ENCODE measurements at regions of chr11 and their contacts with region 1.

Region 1: DNA sequence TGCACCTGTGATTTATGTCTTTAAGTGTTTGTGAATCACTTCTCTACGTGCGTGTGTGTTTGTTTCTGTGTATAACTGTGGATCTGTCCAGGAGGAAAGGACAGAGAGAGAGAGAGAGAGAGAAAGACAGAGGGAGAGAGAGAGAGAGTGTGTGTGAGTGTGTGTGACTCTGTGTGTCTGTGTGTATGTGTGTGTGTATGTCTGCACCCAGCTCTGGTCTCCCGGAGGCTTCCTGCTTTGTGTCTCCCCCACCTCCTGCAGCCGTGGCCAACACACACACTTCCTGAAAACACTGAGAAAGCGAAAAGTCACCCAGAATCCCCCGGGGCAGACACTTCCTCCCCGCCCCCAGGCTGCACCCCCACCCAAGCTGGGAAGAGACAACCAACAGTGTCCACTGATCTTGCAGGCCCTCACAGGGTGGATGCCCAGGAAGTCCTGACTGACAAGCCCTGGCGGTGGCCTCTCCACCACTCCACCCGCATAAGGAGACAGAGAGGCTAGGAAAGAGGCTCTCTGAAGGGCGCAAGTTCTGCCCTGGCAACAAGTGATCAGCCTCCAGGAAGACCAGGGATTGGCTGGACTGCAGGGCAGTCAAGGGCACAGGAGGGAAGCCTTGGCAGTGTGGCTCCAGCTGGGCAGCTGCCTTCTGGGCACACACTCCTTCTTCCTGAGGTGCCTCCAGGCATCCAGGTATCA is 30.0 kb downstream of the ARAP1 start:
- DNase-seq: peak; percentile 98
- H3K4me3 ChIP-seq: peak overlapping the region; percentile 66 to 73 (median 71)
- H3K27ac ChIP-seq: peak overlapping the region; percentile 74 to 89 (median 84)
- H3K4me1 ChIP-seq: peaks cover 52 to 85% (median 70%) of the 10 kb centered on the region in 4 donors
- H3K27me3 ChIP-seq: no peaks in the 10 kb centered on the region
- CTCF ChIP-seq: no peak
- EP300 ChIP-seq: no peak
- POLR2A ChIP-seq: no peak

Region 2: DNA sequence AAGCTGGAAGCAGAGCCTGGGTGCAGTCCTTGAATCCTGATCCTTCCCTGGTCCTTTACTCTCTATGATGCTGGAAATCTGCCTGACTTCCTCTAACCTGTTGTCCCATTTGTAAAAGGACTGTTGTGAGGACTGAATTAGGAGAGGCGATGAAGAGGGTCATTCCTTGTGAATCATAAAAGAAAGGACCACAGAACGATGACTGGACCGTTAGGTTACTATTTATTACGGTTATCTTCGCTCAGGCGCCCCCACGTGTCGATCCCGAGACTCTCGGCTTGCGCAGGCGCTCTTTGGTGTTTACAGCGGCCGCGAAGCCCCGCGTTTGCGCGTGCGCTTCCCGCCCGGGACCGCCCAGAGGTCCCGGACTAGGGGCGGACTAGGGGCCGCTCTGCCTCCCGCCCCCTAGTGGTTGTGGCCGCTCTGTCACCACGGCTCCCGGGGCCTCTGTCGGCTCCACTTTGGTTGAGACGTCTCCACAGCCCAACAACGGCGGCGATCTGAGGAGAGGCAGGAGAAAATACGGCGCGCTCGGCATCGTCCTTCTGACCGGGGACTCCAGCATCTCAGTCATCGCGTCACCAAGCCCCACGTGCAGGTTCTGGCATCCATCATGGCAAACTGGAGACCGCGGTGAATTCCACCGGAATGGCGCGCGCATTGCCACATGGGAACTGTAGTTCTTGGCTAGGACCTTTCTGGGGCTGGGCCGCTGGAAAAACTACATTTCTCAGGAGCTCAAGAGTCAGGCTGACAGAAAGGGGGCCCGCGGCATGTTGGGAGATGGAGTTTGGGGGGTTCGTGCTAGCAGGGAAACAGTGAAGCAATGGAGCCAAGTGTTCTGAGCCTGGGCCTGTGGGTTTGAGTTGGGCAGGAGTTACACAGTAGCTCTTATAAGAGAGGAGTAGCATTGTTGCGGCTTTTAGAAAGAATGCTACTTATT is 71.5 kb after region 1 on chr11 and contains the start of gene STARD10:
- intact Hi-C with region 1: loop called (anchors 1 kb)
- DNase-seq: peak; percentile 99
- H3K4me3 ChIP-seq: peak within 1 kb of the TSS; percentile 66 to 75 (median 68)
- H3K27ac ChIP-seq: peak within 1 kb of the TSS; percentile 87 to 95 (median 92)
- H3K4me1 ChIP-seq: peaks cover 30 to 33% (median 31%) of the 10 kb centered on the region in 4 donors
- H3K27me3 ChIP-seq: no peaks in the 10 kb centered on the region
- CTCF ChIP-seq: peak; percentile 94 to 100 (median 99)
- EP300 ChIP-seq: no peak
- POLR2A ChIP-seq: no peak
- total RNA-seq, gene STARD10: 26.6 to 75.4 (median 58.1) TPM

Region 3: GRCh38 chr11:72814286-72815109 is 92.3 kb after region 1 on chr11 and contains the start of gene ATG16L2:
- intact Hi-C with region 1: loop called (anchors 5 kb)
- DNase-seq: no peak
- H3K4me3 ChIP-seq: peak within 1 kb of the TSS; percentile 81 to 96 (median 89)
- H3K27ac ChIP-seq: peak within 1 kb of the TSS; percentile 90 to 95 (median 93)
- H3K4me1 ChIP-seq: peaks cover 35 to 59% (median 49%) of the 10 kb centered on the region in 4 donors
- H3K27me3 ChIP-seq: no peaks in the 10 kb centered on the region
- CTCF ChIP-seq: peak; percentile 40 to 62 (median 46)
- EP300 ChIP-seq: no peak
- POLR2A ChIP-seq: peak; percentile 35
- total RNA-seq, gene ATG16L2: 11.8 to 19.3 (median 18.2) TPM